SK-N-SH (cell line): ENCODE measurements at regions of chr10 and their contacts with region 1.

Region 1: DNA sequence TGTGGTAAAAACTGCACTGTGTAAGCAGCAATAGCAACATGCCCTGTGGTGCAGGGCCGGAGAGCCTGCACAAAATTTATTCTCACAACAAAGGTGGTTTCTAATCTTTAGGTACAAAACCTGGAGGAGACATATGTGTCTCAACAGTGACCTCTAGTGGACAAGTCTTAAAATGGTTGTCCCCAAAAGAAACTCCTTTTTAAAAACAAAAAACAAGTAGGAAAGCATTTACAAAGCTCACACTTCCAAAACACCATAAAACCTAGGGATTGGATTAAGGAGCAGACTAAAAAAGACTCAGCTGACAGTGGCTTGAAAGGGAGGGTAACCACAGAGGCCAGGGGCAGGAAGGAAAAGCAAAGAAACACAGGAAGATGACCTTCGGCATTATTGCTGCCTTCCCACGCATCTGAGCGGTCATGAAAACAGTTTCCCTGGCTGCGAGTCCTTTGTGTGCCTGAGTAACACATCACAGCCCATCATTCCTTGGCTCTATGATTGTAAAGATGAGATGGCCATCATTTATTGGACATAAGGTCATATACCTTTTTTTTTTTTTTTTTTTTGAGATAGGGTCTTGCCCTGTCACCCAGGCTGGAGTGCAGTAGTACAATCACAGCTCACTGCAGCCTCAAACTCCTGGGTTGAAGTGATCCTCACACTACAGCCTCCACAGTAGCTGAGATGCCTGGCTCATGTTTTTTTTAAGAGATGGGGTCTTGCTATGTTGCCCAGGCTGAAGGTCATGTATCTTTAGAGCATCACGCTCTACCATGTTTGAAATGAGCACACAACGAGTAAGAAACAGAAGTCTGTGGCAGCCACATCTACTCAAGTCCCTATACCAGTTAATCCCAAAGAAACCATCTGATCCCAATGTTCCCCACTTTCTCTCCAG is 39.5 kb downstream of the RSU1 start:
- DNase-seq: peak; percentile 65
- H3K4me3 ChIP-seq: no peak overlapping the region
- H3K27ac ChIP-seq: no peak overlapping the region
- H3K4me1 ChIP-seq: peaks cover 0 to 4% of the 10 kb centered on the region in 2 experiments; a peak in 1 of 4 replicates
- H3K27me3 ChIP-seq: no peaks in the 10 kb centered on the region
- CTCF ChIP-seq: peak; percentile 86
- EP300 ChIP-seq: no peak
- RAD21 ChIP-seq: peak; percentile 86

Region 2: DNA sequence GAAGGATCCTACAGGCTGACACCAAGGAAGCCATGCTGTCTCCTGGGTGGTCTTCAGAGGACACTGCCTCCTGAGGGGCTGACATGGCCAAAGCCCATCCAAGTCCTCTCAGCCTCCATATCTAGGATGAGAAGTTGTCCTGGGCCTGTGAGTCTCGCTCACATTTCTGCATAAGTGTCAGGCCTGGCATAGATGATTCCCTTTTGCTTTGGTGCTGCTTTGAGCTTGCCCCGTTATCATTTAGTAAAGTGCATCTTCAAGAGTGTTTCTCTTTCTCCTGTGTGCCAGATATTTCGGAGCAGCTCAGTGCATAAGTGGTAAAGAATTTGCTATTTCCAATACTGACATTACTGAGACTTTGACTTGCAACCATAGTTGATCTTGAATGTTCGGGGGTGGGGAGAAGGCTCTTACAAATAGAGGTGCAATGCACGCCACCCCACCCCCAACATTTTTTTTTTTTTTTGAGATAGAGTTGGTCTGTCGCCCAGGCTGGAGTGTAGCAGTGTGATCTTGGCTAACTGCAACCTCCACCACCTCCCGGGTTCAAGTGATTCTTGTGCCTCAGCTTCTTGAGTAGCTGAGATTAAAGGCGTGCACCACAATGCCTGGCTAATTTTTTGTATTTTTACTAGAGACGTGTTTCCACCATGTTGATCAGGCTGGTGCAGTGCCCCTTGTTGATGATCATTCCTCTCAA is 331.8 kb before region 1 on chr10:
- CTCF ChIA-PET with region 1: no interaction called
- POLR2A ChIA-PET with region 1: no interaction called
- DNase-seq: no peak
- H3K4me3 ChIP-seq: no peak overlapping the region
- H3K27ac ChIP-seq: no peak overlapping the region
- H3K4me1 ChIP-seq: peaks cover 0 to 4% of the 10 kb centered on the region in 2 experiments; a peak in 1 of 4 replicates
- H3K27me3 ChIP-seq: no peaks in the 10 kb centered on the region
- CTCF ChIP-seq: no peak
- EP300 ChIP-seq: no peak
- RAD21 ChIP-seq: no peak

Region 3: GRCh38 chr10:16646181-16647059 is 131.3 kb before region 1 on chr10:
- CTCF ChIA-PET with region 1: no interaction called
- POLR2A ChIA-PET with region 1: no interaction called
- DNase-seq: no peak
- H3K4me3 ChIP-seq: no peak overlapping the region
- H3K27ac ChIP-seq: no peak overlapping the region
- H3K4me1 ChIP-seq: peaks cover 0 to 6% of the 10 kb centered on the region in 2 experiments; a peak in 3 of 4 replicates
- H3K27me3 ChIP-seq: no peaks in the 10 kb centered on the region
- CTCF ChIP-seq: no peak
- EP300 ChIP-seq: no peak
- RAD21 ChIP-seq: no peak

Region 4: GRCh38 chr10:16761300-16761699 is 16.4 kb before region 1 on chr10:
- CTCF ChIA-PET with region 1: interaction called, 13 read pairs
- POLR2A ChIA-PET with region 1: no interaction called
- DNase-seq: no peak
- H3K4me3 ChIP-seq: no peak overlapping the region
- H3K27ac ChIP-seq: no peak overlapping the region
- H3K4me1 ChIP-seq: no peaks in the 10 kb centered on the region
- H3K27me3 ChIP-seq: no peaks in the 10 kb centered on the region
- CTCF ChIP-seq: no peak
- EP300 ChIP-seq: no peak
- RAD21 ChIP-seq: no peak